ENCODE measurements at regions of chr4 and their contacts with region 1.

Region 1: DNA sequence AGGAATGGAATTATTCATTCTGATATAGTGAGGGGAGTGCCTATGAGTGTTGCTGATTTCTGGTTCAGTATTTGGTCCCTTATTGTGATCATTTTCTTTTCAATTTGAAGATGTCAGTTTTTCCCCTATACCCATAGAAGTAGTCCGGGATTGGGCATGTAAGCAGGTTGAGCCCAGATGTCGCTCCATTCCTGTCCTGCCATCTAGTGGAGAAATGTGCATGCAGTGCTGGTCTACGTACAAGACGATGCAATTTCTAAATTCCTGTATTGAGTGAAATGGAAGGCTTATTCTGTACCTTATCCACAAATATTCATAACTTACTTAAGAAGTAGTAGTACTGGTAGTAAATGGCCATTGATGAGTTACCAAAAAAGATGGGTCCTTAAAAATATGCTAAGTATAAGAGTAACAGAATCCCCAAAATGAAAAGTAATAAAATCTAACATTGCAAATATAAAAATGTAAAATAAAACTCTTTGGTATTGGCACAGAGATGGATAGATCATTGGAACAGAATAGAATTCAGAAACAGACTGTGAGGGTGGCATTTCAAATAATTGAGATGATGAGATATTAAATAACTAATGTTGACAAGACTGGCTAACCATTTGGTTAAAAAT is 60.9 kb downstream of the UGT8 start:
- DNase-seq: peak in 1 of 2 donors; percentile 8
- ATAC-seq: peak in 2 of 8 donors; percentile 72 to 88
- H3K4me3 ChIP-seq: no peak overlapping the region
- H3K27ac ChIP-seq: no peak overlapping the region
- H3K4me1 ChIP-seq: no peaks in the 10 kb centered on the region
- H3K27me3 ChIP-seq: peaks cover 0 to 19% (median 0%) of the 10 kb centered on the region in 7 donors
- CTCF ChIP-seq: peak; percentile 37 to 80 (median 73)

Region 2: DNA sequence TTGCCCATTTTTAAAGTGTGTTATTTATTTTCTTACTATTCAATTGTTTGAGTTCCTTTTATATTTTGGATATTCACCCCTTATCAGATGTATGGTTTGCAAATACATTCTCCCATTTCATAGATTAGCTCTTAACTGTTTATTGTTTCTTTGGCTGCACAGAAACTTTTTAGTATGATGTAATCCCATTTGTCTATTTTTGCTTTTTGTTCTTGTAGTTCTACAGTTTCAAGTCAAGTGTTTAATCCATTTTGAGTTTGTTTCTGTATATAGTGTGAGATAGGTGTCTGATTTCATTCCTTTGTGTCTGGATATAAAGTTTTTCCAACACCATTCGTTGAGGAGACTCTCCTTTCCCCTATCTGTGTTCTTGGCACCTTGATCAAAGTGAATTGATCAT is 800.6 kb before region 1 on chr4:
- intact Hi-C with region 1: no loop called
- DNase-seq: no peak
- ATAC-seq: no peak
- H3K4me3 ChIP-seq: no peak overlapping the region
- H3K27ac ChIP-seq: no peak overlapping the region
- H3K4me1 ChIP-seq: no peaks in the 10 kb centered on the region
- H3K27me3 ChIP-seq: no peaks in the 10 kb centered on the region
- CTCF ChIP-seq: no peak

Region 3: GRCh38 chr4:114386637-114387233 is 272.8 kb before region 1 on chr4:
- intact Hi-C with region 1: loop called in 9 of 10 experiments (anchors 2 to 10 kb)
- DNase-seq: no peak
- ATAC-seq: no peak
- H3K4me3 ChIP-seq: no peak overlapping the region
- H3K27ac ChIP-seq: no peak overlapping the region
- H3K4me1 ChIP-seq: no peaks in the 10 kb centered on the region
- H3K27me3 ChIP-seq: peaks cover 0 to 5% (median 0%) of the 10 kb centered on the region in 7 donors
- CTCF ChIP-seq: peak; percentile 32 to 74 (median 65)

Measured in heart right ventricle (tissue), 16 donors.